ENCODE measurements at regions of chr10 and their contacts with region 1.

Region 1: DNA sequence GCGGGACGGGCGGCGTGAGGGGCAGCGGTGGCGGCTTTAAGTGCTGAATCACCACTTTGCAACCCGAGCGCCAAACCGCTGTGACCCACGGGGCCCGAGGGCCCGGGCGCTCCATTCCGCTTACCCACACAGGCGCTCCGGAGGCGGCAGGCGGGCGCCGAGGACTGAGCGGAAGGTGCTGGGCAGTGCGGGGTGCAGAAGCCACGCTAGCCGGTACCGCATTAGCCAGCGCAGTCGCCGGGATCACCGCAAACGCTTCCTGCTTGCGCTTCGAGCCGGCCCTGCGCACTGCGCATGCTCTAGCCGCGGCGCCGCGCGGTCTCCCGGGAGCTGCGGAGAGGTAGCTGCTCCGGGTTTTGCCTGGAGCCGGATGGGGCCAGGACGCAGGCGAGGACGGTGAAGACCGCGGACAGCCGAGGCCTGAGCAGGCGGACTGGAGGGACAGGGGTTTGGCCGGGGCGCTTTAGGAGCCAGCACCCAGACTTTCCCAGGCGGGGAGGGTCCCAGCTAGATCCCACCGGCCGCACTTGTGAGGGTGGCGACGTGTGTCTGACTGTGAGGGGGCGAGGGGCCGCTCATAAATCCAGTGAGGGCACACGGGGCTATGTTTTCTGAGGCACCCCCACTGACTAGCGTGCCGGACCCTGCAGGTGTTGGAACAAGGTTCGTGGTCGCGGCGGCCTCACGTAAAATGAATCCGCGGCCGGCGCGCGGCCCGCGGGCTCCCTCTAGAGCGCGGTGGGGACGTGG is at the start of gene IDE:
- DNase-seq: peak; percentile 77 to 83 (median 81)
- H3K4me3 ChIP-seq: peak within 1 kb of the TSS; percentile 50 to 86
- H3K4me3 Mint-ChIP-seq: peak within 1 kb of the TSS; percentile 88 to 95 (median 92)
- H3K27ac ChIP-seq: peak within 1 kb of the TSS; percentile 85
- H3K27ac Mint-ChIP-seq: peak within 1 kb of the TSS; percentile 90 to 96 (median 93)
- H3K4me1 ChIP-seq: peaks cover 26% of the 10 kb centered on the region
- H3K4me1 Mint-ChIP-seq: peaks cover 27 to 46% (median 36%) of the 10 kb centered on the region in 4 donors
- H3K27me3 ChIP-seq: no peaks in the 10 kb centered on the region
- H3K27me3 Mint-ChIP-seq: no peaks in the 10 kb centered on the region
- total RNA-seq, gene IDE: 38.4 to 40.2 TPM

Region 2: DNA sequence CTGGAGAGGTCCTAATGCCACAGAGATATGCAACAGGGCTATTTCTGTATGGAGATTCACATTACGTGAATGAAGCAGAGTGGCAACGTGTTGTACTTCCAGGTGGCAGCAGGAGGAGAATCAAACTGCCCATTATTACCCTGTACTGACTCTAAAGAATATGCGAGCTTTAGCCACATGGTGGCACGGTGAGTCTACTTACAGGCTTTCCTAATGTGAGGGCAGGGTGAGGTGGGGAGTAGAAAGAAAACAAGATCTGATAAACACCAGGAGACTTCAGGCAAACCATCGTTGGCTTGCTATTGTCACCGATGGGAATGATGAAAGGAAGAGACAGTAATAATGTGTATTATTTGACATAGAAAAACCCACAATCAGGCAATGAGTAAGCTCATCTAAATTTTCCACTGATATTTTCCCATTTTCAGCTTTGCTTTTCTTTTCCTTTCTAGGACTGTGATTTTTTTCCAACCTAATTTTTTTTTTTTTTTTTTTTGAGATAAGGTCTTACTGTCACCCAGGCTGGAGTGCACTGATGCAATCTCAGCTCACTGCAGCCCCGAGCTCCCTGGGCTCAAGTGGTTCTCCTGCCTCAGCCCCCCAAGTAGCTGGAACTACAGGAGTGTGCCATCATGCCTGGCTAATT is 486.1 kb before region 1 on chr10:
- CTCF ChIA-PET with region 1: no interaction called
- POLR2A ChIA-PET with region 1: no interaction called
- intact Hi-C with region 1: loop called (anchors 5 kb)
- DNase-seq: peak; percentile 43 to 60 (median 51)
- H3K4me3 ChIP-seq: no peak overlapping the region
- H3K4me3 Mint-ChIP-seq: no peak overlapping the region
- H3K27ac ChIP-seq: no peak overlapping the region
- H3K27ac Mint-ChIP-seq: peak overlapping the region in 1 of 7 donors; percentile 22
- H3K4me1 ChIP-seq: no peaks in the 10 kb centered on the region
- H3K4me1 Mint-ChIP-seq: peaks cover 0 to 6% (median 3%) of the 10 kb centered on the region in 4 donors
- H3K27me3 ChIP-seq: no peaks in the 10 kb centered on the region
- H3K27me3 Mint-ChIP-seq: no peaks in the 10 kb centered on the region

Region 3: DNA sequence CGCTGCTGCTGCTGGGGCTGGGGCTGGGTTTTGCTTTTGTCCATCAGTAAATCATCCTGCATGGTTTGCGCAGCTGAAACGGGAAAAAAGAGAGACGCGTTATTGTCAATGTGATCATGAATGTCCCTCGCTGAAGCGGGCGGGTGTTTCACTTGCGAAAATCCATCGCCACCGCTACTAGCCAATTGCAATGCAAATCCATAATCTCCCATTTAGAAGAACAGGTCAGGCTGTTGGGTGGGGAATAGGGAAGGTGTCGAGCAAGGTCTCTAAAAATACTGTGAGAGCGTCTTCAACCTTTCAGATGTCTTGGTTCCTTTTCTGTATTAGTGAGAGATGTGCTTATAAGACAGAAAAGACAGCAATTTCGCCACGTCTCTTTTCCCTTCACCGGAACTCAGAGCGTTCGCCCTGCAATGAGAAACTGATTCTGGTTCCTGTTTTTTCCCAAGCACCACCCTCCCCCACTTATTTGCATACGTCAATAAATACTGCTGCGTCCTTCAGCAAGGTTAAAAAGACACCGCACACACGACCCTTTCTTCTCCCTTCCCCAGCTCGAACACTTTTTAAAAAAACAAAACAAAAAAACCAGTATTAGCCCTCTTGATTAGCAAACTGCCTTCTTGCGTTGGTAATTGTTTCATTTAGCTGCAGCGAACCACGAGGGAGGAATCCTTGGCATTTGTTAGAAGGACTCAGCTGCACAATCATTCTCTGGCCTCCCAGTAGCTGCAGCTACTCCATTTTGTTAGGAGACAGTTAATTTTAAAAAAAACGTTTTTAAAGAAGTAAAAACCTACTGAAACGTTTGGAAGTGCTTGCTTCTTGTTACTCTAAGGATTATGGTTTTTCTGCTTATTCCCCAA is 333.4 kb before region 1 on chr10:
- CTCF ChIA-PET with region 1: no interaction called
- POLR2A ChIA-PET with region 1: interaction called, 3 read pairs
- intact Hi-C with region 1: loop called (anchors 5 kb)
- DNase-seq: peak; percentile 39 to 49 (median 48)
- H3K4me3 ChIP-seq: peak overlapping the region; percentile 37 to 78
- H3K4me3 Mint-ChIP-seq: peak overlapping the region; percentile 90 to 96 (median 93)
- H3K27ac ChIP-seq: peak overlapping the region; percentile 56
- H3K27ac Mint-ChIP-seq: peak overlapping the region; percentile 42 to 92 (median 81)
- H3K4me1 ChIP-seq: peaks cover 37% of the 10 kb centered on the region
- H3K4me1 Mint-ChIP-seq: peaks cover 24 to 52% (median 38%) of the 10 kb centered on the region in 4 donors
- H3K27me3 ChIP-seq: no peaks in the 10 kb centered on the region
- H3K27me3 Mint-ChIP-seq: no peaks in the 10 kb centered on the region

Region 4: GRCh38 chr10:92517034-92517655 is 56.8 kb before region 1 on chr10:
- CTCF ChIA-PET with region 1: interaction called, 215 read pairs
- POLR2A ChIA-PET with region 1: interaction called, 25 read pairs
- intact Hi-C with region 1: loop called (anchors 1 kb)
- DNase-seq: peak; percentile 68 to 75 (median 72)
- H3K4me3 ChIP-seq: no peak overlapping the region
- H3K4me3 Mint-ChIP-seq: no peak overlapping the region
- H3K27ac ChIP-seq: no peak overlapping the region
- H3K27ac Mint-ChIP-seq: peak overlapping the region in 5 of 7 donors; percentile 31 to 56 (median 53)
- H3K4me1 ChIP-seq: peaks cover 8% of the 10 kb centered on the region
- H3K4me1 Mint-ChIP-seq: peaks cover 6 to 8% (median 7%) of the 10 kb centered on the region in 4 donors
- H3K27me3 ChIP-seq: no peaks in the 10 kb centered on the region
- H3K27me3 Mint-ChIP-seq: no peaks in the 10 kb centered on the region

Region 5: GRCh38 chr10:92527716-92528115 is 46.3 kb before region 1 on chr10:
- CTCF ChIA-PET with region 1: interaction called, 13 read pairs
- POLR2A ChIA-PET with region 1: no interaction called
- intact Hi-C with region 1: no loop called
- DNase-seq: no peak
- H3K4me3 ChIP-seq: no peak overlapping the region
- H3K4me3 Mint-ChIP-seq: no peak overlapping the region
- H3K27ac ChIP-seq: no peak overlapping the region
- H3K27ac Mint-ChIP-seq: peak overlapping the region in 2 of 7 donors; percentile 19 to 55
- H3K4me1 ChIP-seq: no peaks in the 10 kb centered on the region
- H3K4me1 Mint-ChIP-seq: no peaks in the 10 kb centered on the region
- H3K27me3 ChIP-seq: no peaks in the 10 kb centered on the region
- H3K27me3 Mint-ChIP-seq: no peaks in the 10 kb centered on the region

Region 6: DNA sequence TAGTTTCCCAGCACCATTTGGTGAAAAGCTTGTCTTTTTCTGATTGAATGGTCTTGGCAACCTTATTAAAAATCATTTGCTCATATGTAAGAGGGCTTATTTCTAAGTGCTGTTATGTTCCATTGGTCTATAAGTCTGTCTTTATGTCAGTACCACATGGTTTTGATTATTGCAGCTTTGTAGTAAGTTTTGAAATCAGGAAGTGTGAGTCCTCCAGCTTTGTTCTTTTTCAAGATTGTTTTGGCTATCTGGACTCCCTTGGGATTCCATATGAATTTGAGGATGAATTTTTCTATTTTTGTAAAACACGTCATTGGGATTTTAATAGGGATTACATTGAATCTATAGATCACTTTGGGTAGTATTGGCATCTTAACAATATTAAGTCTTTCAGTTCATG is 24.3 kb after region 1 on chr10:
- CTCF ChIA-PET with region 1: interaction called, 7 read pairs
- POLR2A ChIA-PET with region 1: interaction called, 151 read pairs
- intact Hi-C with region 1: no loop called
- DNase-seq: no peak
- H3K4me3 ChIP-seq: no peak overlapping the region
- H3K4me3 Mint-ChIP-seq: no peak overlapping the region
- H3K27ac ChIP-seq: no peak overlapping the region
- H3K27ac Mint-ChIP-seq: peak overlapping the region in 3 of 7 donors; percentile 32 to 69 (median 63)
- H3K4me1 ChIP-seq: peaks cover 61% of the 10 kb centered on the region
- H3K4me1 Mint-ChIP-seq: peaks cover 21 to 54% (median 28%) of the 10 kb centered on the region in 4 donors
- H3K27me3 ChIP-seq: no peaks in the 10 kb centered on the region
- H3K27me3 Mint-ChIP-seq: no peaks in the 10 kb centered on the region

Region 7: DNA sequence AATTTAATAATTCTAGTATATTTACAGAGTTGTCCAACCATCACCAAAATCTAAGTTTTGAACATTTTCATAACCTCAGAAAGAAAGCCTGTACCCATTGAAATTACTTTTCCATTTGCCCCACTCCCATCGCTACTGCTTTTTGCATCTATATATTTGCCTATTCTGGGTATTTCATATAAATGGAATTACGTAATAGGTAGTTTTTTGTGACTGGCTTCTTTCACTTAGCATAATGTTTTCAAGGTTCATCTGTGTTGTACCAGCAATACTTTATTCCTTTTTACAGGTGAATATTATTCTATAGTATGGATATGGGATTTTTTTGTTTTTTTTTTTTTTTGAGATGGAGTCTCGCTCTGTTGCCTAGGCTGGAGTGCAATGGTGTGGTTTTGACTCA is 41.5 kb after region 1 on chr10:
- CTCF ChIA-PET with region 1: no interaction called
- POLR2A ChIA-PET with region 1: no interaction called
- intact Hi-C with region 1: no loop called
- DNase-seq: no peak
- H3K4me3 ChIP-seq: no peak overlapping the region
- H3K4me3 Mint-ChIP-seq: no peak overlapping the region
- H3K27ac ChIP-seq: no peak overlapping the region
- H3K27ac Mint-ChIP-seq: no peak overlapping the region
- H3K4me1 ChIP-seq: no peaks in the 10 kb centered on the region
- H3K4me1 Mint-ChIP-seq: peaks cover 0 to 10% (median under 1%) of the 10 kb centered on the region in 4 donors
- H3K27me3 ChIP-seq: no peaks in the 10 kb centered on the region
- H3K27me3 Mint-ChIP-seq: no peaks in the 10 kb centered on the region